PC-9 (cell line): ENCODE measurements at regions of chr1 and their contacts with region 1.

Region 1: GRCh38 chr1:232982238-232982944 is 32.0 kb downstream of the NTPCR start:
- DNase-seq: peak; percentile 35 to 45
- H3K4me3 ChIP-seq: no peak overlapping the region
- H3K27ac ChIP-seq: no peak overlapping the region
- H3K4me1 ChIP-seq: no peaks in the 10 kb centered on the region
- H3K27me3 ChIP-seq: no peaks in the 10 kb centered on the region
- CTCF ChIP-seq: no peak

Region 2: GRCh38 chr1:232950197-232951176 is 31.9 kb before region 1 on chr1 and contains the start of gene NTPCR:
- CTCF ChIA-PET with region 1: no interaction called
- POLR2A ChIA-PET with region 1: no interaction called
- intact Hi-C with region 1: loop called (anchors 2 kb)
- DNase-seq: peak; percentile 74 to 93
- H3K4me3 ChIP-seq: peak within 1 kb of the TSS; percentile 78
- H3K27ac ChIP-seq: peak within 1 kb of the TSS; percentile 45
- H3K4me1 ChIP-seq: peaks cover 14% of the 10 kb centered on the region
- H3K27me3 ChIP-seq: no peaks in the 10 kb centered on the region
- CTCF ChIP-seq: no peak; the same call in 1 of the 2 replicates
- total RNA-seq, gene NTPCR: 45.3 and 55.6 TPM in 2 replicates

Region 3: DNA sequence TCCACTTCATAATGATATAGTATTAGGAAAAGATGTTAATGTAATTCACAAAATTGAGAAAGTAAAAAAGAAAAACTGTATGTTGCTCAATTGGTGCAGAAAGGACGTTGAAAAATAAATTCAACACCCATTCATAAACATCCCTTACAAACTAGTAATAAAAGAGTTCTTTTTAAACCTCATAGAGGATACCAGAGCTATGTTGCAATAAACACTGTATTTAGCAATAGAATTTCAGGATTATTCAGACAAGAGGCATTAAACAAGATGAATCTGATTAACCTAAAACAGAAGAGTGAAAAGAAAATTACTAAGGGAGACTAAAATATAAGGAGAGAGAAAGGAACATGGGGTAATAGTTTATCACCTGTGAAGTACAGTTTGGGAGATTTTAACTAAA is 122.8 kb after region 1 on chr1:
- CTCF ChIA-PET with region 1: no interaction called
- POLR2A ChIA-PET with region 1: interaction called, 15 read pairs
- intact Hi-C with region 1: no loop called
- DNase-seq: no peak
- H3K4me3 ChIP-seq: no peak overlapping the region
- H3K27ac ChIP-seq: no peak overlapping the region
- H3K4me1 ChIP-seq: peaks cover 28% of the 10 kb centered on the region
- H3K27me3 ChIP-seq: no peaks in the 10 kb centered on the region
- CTCF ChIP-seq: no peak

Region 4: GRCh38 chr1:233113009-233113879 is 130.9 kb after region 1 on chr1:
- CTCF ChIA-PET with region 1: interaction called, 3 read pairs
- POLR2A ChIA-PET with region 1: interaction called, 3 read pairs
- intact Hi-C with region 1: loop called (anchors 2 kb)
- DNase-seq: peak; percentile 81 to 99
- H3K4me3 ChIP-seq: peak overlapping the region; percentile 43; the same call in 1 of the 2 replicates
- H3K27ac ChIP-seq: peak overlapping the region; percentile 99
- H3K4me1 ChIP-seq: peaks cover 49% of the 10 kb centered on the region
- H3K27me3 ChIP-seq: no peaks in the 10 kb centered on the region
- CTCF ChIP-seq: no peak